ENCODE measurements at regions of chr19 and their contacts with region 1.

Region 1: DNA sequence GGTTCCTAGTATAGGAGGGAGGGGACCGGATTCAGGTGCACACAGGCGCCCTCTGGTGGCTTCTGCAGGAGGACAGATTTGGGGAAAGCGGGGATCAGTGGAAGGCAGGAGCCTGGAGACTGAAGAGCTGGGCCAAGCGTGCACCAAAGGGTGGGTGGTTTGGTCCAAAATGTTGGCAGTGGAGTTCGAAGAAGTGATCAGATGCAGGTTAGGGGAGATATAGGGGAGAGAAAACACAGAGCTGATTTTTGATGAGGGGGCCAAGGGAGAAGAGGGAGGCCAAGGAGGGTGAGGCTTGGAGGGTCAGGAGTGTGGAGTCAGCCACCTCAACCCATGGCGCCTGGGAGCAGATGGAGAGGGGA is 6.8 kb upstream of the CARM1 start:
- DNase-seq: peak; percentile 89
- ATAC-seq: peak; percentile 93
- H3K4me3 Mint-ChIP-seq: peak overlapping the region; percentile 19
- H3K27ac Mint-ChIP-seq: peak overlapping the region; percentile 57
- H3K4me1 Mint-ChIP-seq: peaks cover 27% of the 10 kb centered on the region
- H3K27me3 Mint-ChIP-seq: no peaks in the 10 kb centered on the region

Region 2: GRCh38 chr19:10730923-10731322 is 133.6 kb before region 1 on chr19:
- CTCF ChIA-PET with region 1: interaction called, 10 read pairs
- DNase-seq: no peak
- ATAC-seq: no peak
- H3K4me3 Mint-ChIP-seq: no peak overlapping the region
- H3K27ac Mint-ChIP-seq: peak overlapping the region; percentile 82
- H3K4me1 Mint-ChIP-seq: peaks cover 47% of the 10 kb centered on the region
- H3K27me3 Mint-ChIP-seq: no peaks in the 10 kb centered on the region

Region 3: DNA sequence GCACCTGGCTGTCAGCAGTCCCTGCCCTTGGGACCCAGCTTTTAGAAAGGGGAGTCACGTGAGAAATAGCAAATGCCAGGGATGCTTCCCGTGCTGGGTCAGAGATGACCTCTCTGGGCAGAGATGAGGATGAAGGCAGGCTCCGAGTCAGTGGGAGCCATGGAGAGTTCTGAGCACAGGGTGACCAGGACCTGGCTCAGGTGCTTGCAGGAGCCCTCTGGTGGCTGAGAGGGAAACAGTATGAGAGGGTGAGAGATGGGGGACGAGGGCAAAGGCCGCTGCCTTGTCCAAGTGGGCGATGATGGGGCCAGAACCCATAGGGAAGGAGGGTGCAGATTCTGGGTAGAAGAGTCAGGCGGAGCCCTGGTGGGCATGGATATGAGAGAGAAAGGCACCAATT is 44.3 kb before region 1 on chr19:
- CTCF ChIA-PET with region 1: interaction called, 24 read pairs
- DNase-seq: no peak
- ATAC-seq: no peak
- H3K4me3 Mint-ChIP-seq: no peak overlapping the region
- H3K27ac Mint-ChIP-seq: no peak overlapping the region
- H3K4me1 Mint-ChIP-seq: peaks cover 28% of the 10 kb centered on the region
- H3K27me3 Mint-ChIP-seq: no peaks in the 10 kb centered on the region

Region 4: GRCh38 chr19:10835754-10836477 is 28.6 kb before region 1 on chr19 and contains the start of gene TMED1:
- CTCF ChIA-PET with region 1: interaction called, 50 read pairs
- DNase-seq: peak; percentile 99
- ATAC-seq: peak; percentile 92
- H3K4me3 Mint-ChIP-seq: peak within 1 kb of the TSS; percentile 88
- H3K27ac Mint-ChIP-seq: peak within 1 kb of the TSS; percentile 96
- H3K4me1 Mint-ChIP-seq: peaks cover 18% of the 10 kb centered on the region
- H3K27me3 Mint-ChIP-seq: no peaks in the 10 kb centered on the region
- total RNA-seq, gene TMED1: 16.0 to 19.2 TPM

Region 5: DNA sequence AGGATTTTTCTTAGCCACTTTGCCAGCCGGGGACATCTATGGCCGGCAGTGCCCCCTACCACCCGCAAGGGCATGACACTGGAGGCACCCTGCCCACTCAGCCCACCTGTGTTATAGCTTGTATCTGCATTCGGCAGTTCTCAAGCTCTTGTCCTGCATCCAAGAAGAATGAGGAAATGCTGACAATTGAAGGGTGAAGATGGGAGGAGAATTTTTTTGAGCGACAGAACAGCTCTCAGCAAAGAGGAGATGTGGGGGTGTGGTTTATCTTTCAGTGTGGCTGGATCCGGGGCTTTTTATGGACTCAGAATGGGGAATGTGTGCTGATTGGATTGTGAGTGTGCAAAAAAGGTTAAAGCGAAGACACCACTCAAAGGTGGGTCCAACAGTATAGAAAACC is 21.7 kb before region 1 on chr19:
- CTCF ChIA-PET with region 1: interaction called, 50 read pairs
- DNase-seq: no peak
- ATAC-seq: no peak
- H3K4me3 Mint-ChIP-seq: no peak overlapping the region
- H3K27ac Mint-ChIP-seq: no peak overlapping the region
- H3K4me1 Mint-ChIP-seq: peaks cover 14% of the 10 kb centered on the region
- H3K27me3 Mint-ChIP-seq: peaks cover 6% of the 10 kb centered on the region

Region 6: DNA sequence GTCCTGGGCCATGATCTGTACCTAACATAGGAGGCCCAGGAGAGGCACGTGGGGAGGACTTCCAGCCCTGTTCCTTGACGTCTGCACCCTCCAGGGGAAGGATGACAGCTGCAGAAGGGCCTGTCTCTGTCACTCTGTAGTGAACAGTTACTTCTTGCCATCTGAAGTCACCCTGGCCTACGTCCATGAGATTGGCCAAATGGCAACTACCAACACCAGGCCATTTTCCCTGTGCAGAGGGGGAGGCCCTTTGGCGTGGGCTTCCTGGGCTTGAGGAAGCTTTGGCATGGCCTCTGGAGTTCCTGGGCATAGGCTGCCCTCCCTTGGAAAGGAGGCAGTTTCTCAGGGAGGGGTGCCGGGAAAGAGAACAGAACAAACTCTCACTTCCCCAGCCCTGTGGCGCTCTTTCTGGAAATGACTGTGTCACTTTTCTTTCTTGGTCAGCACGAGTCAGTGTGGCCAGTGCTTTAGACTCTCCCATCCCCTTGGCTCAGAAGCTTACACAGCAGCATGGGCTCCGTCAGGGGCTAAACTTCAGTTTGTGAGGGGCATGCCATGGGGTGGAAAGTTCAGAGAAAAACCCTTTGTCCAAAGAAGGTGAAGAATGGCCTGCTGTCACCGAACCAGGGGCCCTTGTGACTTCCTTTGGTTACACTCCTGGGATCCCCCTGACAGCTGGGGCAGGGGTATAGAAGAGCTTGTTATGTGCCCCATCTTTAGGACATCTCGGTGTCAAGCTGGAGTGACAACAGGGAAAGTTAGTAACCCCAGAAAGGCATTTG is 12.1 kb after region 1 on chr19:
- CTCF ChIA-PET with region 1: interaction called, 29 read pairs
- DNase-seq: peak; percentile 56
- ATAC-seq: no peak
- H3K4me3 Mint-ChIP-seq: peak overlapping the region; percentile 32
- H3K27ac Mint-ChIP-seq: peak overlapping the region; percentile 33
- H3K4me1 Mint-ChIP-seq: peaks cover 44% of the 10 kb centered on the region
- H3K27me3 Mint-ChIP-seq: no peaks in the 10 kb centered on the region

Region 7: GRCh38 chr19:10899151-10899653 is 34.7 kb after region 1 on chr19:
- CTCF ChIA-PET with region 1: no interaction called
- DNase-seq: no peak
- ATAC-seq: no peak
- H3K4me3 Mint-ChIP-seq: no peak overlapping the region
- H3K27ac Mint-ChIP-seq: no peak overlapping the region
- H3K4me1 Mint-ChIP-seq: peaks cover 8% of the 10 kb centered on the region
- H3K27me3 Mint-ChIP-seq: no peaks in the 10 kb centered on the region

Measured in activated CD8-positive, alpha-beta memory T cell treated with anti-CD3 and anti-CD28 coated beads, Interleukin-2, amount 10 ng/mL, durations not matched to agents 7 days and 5 days (primary cell).